RWPE1 (cell line): ENCODE measurements at regions of chr16 and their contacts with region 1.

Region 1: DNA sequence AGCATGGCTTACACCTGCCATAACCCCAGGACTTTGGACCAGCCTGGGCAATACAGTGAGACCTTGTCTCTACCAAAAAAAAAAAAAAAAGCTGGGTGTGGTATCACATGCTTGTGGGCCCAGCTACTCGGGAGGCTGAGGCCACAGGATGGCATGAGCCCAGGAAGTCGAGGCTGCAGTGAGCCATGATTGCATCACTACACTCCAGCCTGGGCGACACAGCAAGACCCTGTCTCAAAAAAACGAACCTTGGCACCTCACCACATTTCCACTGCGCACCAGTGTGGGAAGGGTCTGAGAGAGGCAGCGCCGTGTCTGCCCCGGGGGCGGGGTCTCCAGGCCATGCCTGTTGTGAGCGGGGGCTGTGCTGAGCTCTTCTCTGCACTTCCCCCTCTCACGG is 6.3 kb downstream of the ACSF3 start:
- DNase-seq: no peak
- H3K27ac ChIP-seq: no peak overlapping the region
- CTCF ChIP-seq: no peak

Region 2: DNA sequence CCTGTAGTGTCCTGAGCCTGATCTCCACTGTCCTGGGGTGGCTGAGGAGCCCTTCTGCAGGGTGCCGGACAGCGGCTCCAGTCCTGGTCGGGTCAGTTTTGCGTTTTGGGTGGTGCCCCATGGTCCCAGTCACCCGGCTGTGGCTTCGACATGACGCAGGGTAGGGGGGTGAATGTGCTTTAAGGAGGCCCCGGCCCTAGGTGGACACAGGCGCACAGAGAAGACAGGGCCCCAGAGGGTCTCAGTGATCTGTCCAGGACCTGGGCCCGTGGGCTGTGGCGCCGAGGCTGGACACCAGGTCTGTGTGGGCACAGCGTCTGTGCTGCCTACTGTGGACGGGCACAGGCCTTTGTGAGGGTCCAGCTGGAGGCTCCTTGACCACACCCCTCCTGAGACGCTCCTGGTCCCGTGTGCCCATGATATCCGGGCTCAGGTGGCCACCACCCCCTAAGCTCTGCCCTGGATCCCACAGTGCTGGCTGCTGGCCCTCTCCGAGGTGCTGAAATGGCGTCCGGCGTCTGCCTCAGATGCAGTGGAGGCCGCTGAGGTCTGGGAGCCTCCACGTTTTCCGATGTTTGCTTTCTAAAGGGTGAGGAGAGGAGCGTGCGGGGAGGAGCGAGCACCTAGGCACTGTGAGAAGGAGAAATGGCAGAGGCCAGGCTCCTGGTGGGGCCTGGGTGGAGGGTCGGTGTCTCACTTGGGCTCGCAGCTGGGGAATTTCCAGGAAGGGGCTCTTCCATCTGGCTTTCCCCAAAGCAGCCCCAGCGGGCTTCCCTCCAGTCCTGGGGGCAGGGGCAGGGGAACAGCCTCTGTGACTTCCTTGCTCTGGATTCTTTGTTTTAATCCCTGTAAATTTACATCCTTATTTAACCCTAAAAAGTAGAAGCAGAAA is 62.4 kb before region 1 on chr16:
- CTCF ChIA-PET with region 1: no interaction called
- POLR2A ChIA-PET with region 1: no interaction called
- DNase-seq: peak; percentile 20
- H3K27ac ChIP-seq: no peak overlapping the region
- CTCF ChIP-seq: no peak

Region 3: GRCh38 chr16:89246903-89247733 is 147.2 kb after region 1 on chr16:
- CTCF ChIA-PET with region 1: no interaction called
- POLR2A ChIA-PET with region 1: interaction called, 10 read pairs
- DNase-seq: peak; percentile 95
- H3K27ac ChIP-seq: peak overlapping the region; percentile 76
- CTCF ChIP-seq: no peak